Activated naive CD4-positive, alpha-beta T cell treated with anti-CD3 and anti-CD28 coated beads, Interleukin-2, amount 10 ng/mL, durations not matched to agents 7 days and 5 days (primary cell): ENCODE measurements at regions of chr10 and their contacts with region 1.

Region 1: GRCh38 chr10:35195361-35196306 is 69.0 kb downstream of the CREM start:
- DNase-seq: peak; percentile 89
- H3K4me3 Mint-ChIP-seq: peak overlapping the region; percentile 79
- H3K27ac Mint-ChIP-seq: peak overlapping the region; percentile 100
- H3K4me1 Mint-ChIP-seq: peaks cover 62% of the 10 kb centered on the region
- H3K27me3 Mint-ChIP-seq: no peaks in the 10 kb centered on the region

Region 2: GRCh38 chr10:35126530-35127296 is 68.9 kb before region 1 on chr10 and contains the start of gene CREM:
- CTCF ChIA-PET with region 1: interaction called, 67 read pairs
- DNase-seq: peak; percentile 100
- H3K4me3 Mint-ChIP-seq: peak within 1 kb of the TSS; percentile 86
- H3K27ac Mint-ChIP-seq: peak within 1 kb of the TSS; percentile 96
- H3K4me1 Mint-ChIP-seq: peaks cover 55% of the 10 kb centered on the region
- H3K27me3 Mint-ChIP-seq: no peaks in the 10 kb centered on the region

Region 3: DNA sequence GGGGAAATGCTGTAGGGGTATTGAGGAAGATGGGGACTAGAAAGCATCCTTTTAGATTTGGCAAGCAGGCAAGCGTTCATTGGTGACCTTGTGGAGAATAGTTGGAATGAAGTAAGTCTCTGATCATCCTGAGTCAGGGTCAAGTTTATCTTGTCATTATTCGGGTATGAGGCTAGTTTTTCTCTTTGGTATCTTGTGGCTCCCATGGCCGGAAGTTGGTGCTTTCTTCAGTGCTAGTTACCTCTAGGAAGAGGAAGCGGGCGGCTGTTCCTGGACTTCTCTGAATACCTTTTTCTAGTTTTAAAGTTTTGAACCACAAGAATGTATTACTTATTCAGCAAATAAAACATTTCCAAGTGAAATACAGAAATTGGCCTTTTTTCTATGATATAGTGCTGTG is 59.8 kb before region 1 on chr10:
- CTCF ChIA-PET with region 1: interaction called, 36 read pairs
- DNase-seq: peak; percentile 34
- H3K4me3 Mint-ChIP-seq: peak overlapping the region; percentile 43
- H3K27ac Mint-ChIP-seq: peak overlapping the region; percentile 86
- H3K4me1 Mint-ChIP-seq: peaks cover 50% of the 10 kb centered on the region
- H3K27me3 Mint-ChIP-seq: no peaks in the 10 kb centered on the region

Region 4: DNA sequence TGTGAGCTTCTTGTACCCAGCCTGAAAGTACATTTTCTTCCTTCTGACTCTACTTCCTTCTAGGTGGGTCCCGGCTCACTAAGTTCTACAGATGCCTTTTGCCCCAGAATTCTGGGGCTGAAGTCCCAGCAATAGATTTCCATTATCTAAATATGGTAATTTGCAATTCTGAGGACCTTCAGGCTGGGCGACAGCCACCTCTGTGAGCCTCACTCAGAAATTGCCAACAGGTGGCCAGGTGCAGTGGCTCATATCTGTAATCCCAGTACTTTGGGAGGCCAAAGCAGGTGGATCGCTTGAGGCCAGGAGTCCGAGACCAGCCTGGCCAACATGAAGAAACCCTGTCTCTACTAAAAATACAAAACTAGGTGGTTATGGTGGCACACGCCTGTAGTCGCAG is 45.3 kb before region 1 on chr10:
- CTCF ChIA-PET with region 1: interaction called, 28 read pairs
- DNase-seq: no peak
- H3K4me3 Mint-ChIP-seq: peak overlapping the region; percentile 34
- H3K27ac Mint-ChIP-seq: peak overlapping the region; percentile 85
- H3K4me1 Mint-ChIP-seq: peaks cover 39% of the 10 kb centered on the region
- H3K27me3 Mint-ChIP-seq: no peaks in the 10 kb centered on the region

Region 5: GRCh38 chr10:35208536-35208935 is 12.9 kb after region 1 on chr10:
- CTCF ChIA-PET with region 1: interaction called, 77 read pairs
- DNase-seq: peak; percentile 74
- H3K4me3 Mint-ChIP-seq: peak overlapping the region; percentile 60
- H3K27ac Mint-ChIP-seq: peak overlapping the region; percentile 96
- H3K4me1 Mint-ChIP-seq: peaks cover 71% of the 10 kb centered on the region
- H3K27me3 Mint-ChIP-seq: no peaks in the 10 kb centered on the region

Region 6: GRCh38 chr10:35218339-35218955 is 22.8 kb after region 1 on chr10:
- CTCF ChIA-PET with region 1: interaction called, 99 read pairs
- DNase-seq: peak; percentile 91
- H3K4me3 Mint-ChIP-seq: no peak overlapping the region
- H3K27ac Mint-ChIP-seq: peak overlapping the region; percentile 71
- H3K4me1 Mint-ChIP-seq: peaks cover 40% of the 10 kb centered on the region
- H3K27me3 Mint-ChIP-seq: peaks cover 6% of the 10 kb centered on the region